WTC11 (cell line): ENCODE measurements at regions of chr7 and their contacts with region 1.

Region 1: DNA sequence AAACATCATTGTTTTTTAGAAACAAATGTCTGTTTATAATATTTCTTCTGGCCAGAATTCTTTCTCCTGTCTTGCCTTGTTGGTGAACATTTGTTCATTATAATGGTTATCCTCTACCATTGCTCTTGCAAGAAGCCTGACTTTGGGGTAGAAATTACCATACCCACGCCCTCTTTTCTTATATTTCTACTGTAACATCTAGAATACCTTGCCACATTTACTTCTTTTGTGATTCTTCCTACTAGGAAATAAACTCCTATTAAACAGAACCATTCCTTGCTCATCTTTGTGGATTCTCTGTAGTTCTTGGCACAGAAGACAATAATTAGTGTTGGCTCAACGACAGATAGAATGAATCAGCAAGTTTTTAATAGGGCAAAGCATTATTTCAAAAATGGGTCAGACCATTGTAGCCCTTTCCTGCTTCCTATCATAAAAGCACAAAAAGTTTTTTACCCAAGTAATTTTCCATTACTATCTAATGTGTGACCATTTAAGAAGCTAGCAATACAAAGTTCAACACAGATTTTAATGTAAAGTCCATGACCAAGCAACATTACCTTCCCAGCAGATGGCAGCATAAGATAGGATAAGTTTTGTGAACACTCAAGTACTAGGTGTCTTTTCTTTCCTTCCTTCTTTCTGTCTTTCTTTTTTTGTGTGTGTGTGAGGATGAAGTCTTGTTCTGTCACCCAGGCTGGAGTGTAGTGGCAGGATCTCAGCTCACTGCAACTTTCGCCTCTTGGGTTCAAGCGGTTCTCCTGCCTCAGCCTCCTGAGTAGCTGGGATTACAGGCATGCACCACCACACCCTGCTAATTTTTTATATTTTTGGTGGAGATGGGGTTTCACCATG is 270.4 kb downstream of the HGF start:
- DNase-seq: no peak
- ATAC-seq: peak; percentile 89
- H3K4me3 Mint-ChIP-seq: no peak overlapping the region
- H3K27ac Mint-ChIP-seq: peak overlapping the region; percentile 16; the same call in 1 of the 2 replicates
- H3K4me1 Mint-ChIP-seq: peaks cover 28% of the 10 kb centered on the region
- H3K27me3 Mint-ChIP-seq: no peaks in the 10 kb centered on the region
- CTCF ChIP-seq: peak; percentile 37; the same call in 1 of the 2 replicates

Region 2: DNA sequence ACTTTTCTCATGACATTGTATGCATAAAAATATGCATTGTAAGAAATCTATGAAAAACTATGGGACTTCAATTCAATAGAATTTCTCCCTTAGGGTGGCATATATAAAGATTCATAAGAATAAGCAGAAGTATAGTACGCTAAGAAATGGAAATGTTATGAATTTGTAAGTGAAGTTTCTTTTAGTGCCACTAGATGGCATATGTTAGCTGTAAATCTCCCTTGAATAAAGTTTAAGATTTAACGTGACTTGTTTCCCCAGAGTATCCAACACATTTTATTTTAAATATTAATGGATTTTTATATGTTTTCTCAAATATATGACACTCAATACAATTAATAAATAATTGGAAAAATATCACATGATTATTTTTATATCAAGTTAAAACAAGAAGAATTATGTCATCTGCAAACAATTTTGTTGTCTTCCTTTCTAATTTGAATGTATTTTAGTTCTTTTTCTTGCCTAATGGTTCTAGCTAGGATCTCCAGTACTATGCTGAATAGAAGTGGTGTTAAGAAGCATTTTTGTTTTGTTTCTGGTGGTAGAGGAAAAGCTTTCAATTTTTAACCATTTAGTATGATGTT is 16.8 kb before region 1 on chr7:
- CTCF ChIA-PET with region 1: interaction called, 29 read pairs
- POLR2A ChIA-PET with region 1: no interaction called
- DNase-seq: no peak
- ATAC-seq: no peak
- H3K4me3 Mint-ChIP-seq: no peak overlapping the region
- H3K27ac Mint-ChIP-seq: no peak overlapping the region
- H3K4me1 Mint-ChIP-seq: peaks cover 7% of the 10 kb centered on the region; the same call in 1 of the 2 replicates
- H3K27me3 Mint-ChIP-seq: no peaks in the 10 kb centered on the region
- CTCF ChIP-seq: peak; percentile 54

Region 3: DNA sequence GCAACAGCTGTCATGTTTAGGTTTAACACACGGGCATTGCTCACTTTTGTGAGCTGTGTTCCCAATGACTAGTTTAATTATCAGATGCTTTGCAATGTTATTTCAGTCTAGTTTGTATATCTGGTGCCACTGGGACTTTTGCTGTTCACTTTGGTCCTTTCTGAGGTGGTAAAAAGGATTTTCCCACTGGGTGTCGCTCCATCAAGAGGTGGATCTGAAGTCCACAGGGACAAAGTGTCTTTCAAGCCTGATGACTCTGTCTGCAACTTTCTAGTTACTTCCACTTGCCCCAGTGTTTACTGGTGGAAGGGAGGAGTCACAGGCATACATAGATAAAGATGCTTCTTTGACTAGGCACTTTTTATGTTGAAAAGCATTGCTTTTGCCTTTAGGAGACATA is 28.2 kb after region 1 on chr7:
- CTCF ChIA-PET with region 1: no interaction called
- POLR2A ChIA-PET with region 1: no interaction called
- DNase-seq: no peak
- ATAC-seq: no peak; the same call in 1 of the 2 replicates
- H3K4me3 Mint-ChIP-seq: no peak overlapping the region
- H3K27ac Mint-ChIP-seq: no peak overlapping the region
- H3K4me1 Mint-ChIP-seq: no peaks in the 10 kb centered on the region
- H3K27me3 Mint-ChIP-seq: no peaks in the 10 kb centered on the region
- CTCF ChIP-seq: no peak

Region 4: GRCh38 chr7:81707966-81708365 is 208.5 kb after region 1 on chr7:
- CTCF ChIA-PET with region 1: no interaction called
- POLR2A ChIA-PET with region 1: no interaction called
- DNase-seq: no peak
- ATAC-seq: no peak
- H3K4me3 Mint-ChIP-seq: no peak overlapping the region
- H3K27ac Mint-ChIP-seq: no peak overlapping the region
- H3K4me1 Mint-ChIP-seq: peaks cover 35% of the 10 kb centered on the region
- H3K27me3 Mint-ChIP-seq: no peaks in the 10 kb centered on the region
- CTCF ChIP-seq: no peak

Region 5: DNA sequence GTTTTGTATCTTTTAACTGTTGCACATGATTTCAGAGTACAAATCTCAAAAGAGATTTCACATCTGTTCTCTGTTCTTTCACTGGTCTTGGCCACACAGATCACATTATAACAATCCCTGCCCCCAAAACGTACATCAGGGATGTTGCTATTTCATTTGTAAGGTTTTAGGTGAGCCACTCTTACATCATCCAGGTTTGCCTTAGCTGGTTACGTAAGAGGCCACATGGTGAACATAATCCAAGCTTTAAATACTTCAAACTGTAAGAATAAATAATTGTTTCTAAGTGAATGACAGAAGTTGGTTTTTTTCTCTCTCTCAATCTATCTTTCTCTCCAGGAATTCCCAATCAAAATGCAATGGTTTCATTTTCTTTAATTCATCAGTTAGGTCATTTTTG is 516.3 kb after region 1 on chr7:
- CTCF ChIA-PET with region 1: interaction called, 16 read pairs
- POLR2A ChIA-PET with region 1: no interaction called
- DNase-seq: no peak
- ATAC-seq: no peak
- H3K4me3 Mint-ChIP-seq: no peak overlapping the region
- H3K27ac Mint-ChIP-seq: peak overlapping the region; percentile 57; the same call in 1 of the 2 replicates
- H3K4me1 Mint-ChIP-seq: no peaks in the 10 kb centered on the region; the same call in 1 of the 2 replicates
- H3K27me3 Mint-ChIP-seq: no peaks in the 10 kb centered on the region
- CTCF ChIP-seq: no peak